Activated T-helper 2 cell treated with anti-CD3 and anti-CD28 coated beads, Interferon-gamma antibody, Interleukin-2, Interleukin-4, amounts not matched to agents 10 μg/mL and 5 μg/mL and 100 μg/mL, durations not matched to agents 14 hours and 24 hours and 36 hours (primary cell): ENCODE measurements at regions of chr4 and their contacts with region 1.

Region 1: GRCh38 chr4:159175085-159175988 is 72.5 kb downstream of the RAPGEF2 start:
- DNase-seq: peak; percentile 31
- H3K4me3 Mint-ChIP-seq: no peak overlapping the region
- H3K27ac Mint-ChIP-seq: no peak overlapping the region
- H3K4me1 Mint-ChIP-seq: peaks cover 31% of the 10 kb centered on the region
- H3K27me3 Mint-ChIP-seq: peaks cover 14% of the 10 kb centered on the region

Region 2: DNA sequence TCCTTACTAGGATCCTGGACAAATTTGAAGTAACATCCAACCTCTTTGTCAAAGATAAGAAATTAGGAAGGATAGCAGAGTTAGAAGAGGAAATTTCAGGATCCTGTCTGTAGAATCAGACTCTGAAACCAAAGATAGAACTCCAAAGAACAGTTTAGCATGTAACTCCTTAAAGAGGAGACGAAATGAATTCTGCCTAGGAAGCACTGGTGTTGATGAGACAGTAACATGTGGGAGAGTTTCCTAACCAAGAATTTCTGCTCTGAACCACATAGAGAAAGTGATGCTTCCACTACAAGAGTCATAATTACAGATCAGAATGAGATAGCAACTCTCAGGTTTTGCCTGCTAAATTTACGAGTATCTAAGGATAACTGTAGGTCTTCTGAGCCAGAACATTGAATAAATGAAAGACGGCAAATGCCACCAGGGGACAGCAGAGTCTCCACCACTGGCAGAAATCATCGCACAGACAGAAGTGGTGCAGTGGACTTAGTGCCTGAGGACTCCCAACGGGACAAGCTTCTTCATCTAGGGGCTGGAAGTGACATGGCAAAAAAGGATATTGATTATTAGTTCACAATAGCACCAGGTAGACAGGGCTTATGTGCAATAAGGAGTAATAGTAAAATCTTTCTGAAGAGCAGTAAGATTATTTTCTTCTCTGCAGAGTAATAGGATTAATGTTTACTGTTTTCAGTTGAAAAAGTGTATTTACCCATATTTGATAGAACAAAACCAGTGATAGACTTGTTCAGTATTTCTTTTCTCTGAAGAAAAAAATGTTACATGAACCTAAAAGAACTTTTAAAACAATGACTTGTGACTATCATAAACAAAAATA is 445.4 kb before region 1 on chr4:
- intact Hi-C with region 1: loop called (anchors 2 kb)
- DNase-seq: peak; percentile 28
- H3K4me3 Mint-ChIP-seq: no peak overlapping the region
- H3K27ac Mint-ChIP-seq: no peak overlapping the region
- H3K4me1 Mint-ChIP-seq: peaks cover 30% of the 10 kb centered on the region
- H3K27me3 Mint-ChIP-seq: peaks cover 30% of the 10 kb centered on the region

Region 3: GRCh38 chr4:159110961-159111360 is 64.4 kb before region 1 on chr4:
- intact Hi-C with region 1: no loop called
- DNase-seq: no peak
- H3K4me3 Mint-ChIP-seq: no peak overlapping the region
- H3K27ac Mint-ChIP-seq: no peak overlapping the region
- H3K4me1 Mint-ChIP-seq: peaks cover 32% of the 10 kb centered on the region
- H3K27me3 Mint-ChIP-seq: peaks cover 3% of the 10 kb centered on the region